ENCODE measurements at regions of chr12 and their contacts with region 1.

Region 1: DNA sequence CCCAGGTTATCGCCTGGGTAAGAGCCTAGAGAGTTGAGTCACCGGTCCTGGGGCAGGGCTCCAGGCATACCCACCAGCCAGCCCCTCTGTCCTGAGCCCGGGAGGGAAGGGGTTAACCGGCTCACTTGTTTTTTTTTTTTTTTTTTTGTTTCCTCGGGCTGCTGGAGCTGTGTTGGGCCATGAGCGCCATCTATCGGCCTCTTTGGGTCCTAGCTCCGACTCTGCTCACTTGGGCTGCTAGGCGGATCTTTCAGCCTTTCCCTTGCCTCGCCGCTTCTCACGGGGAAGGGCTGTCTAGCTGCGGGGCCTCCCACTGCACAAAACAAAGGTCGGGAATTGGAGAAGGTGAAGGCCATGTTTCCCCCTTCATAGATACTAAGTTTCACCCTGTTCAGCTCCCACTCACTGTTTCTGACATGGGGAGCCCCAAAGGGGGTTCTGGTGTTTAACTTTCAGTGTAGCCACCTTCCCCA is 2.8 kb upstream of the SMUG1 start:
- DNase-seq: peak; percentile 82
- ATAC-seq: peak; percentile 54
- H3K4me3 Mint-ChIP-seq: no peak overlapping the region
- H3K27ac Mint-ChIP-seq: no peak overlapping the region
- H3K4me1 Mint-ChIP-seq: peaks cover 21% of the 10 kb centered on the region
- H3K27me3 Mint-ChIP-seq: peaks cover 53% of the 10 kb centered on the region

Region 2: DNA sequence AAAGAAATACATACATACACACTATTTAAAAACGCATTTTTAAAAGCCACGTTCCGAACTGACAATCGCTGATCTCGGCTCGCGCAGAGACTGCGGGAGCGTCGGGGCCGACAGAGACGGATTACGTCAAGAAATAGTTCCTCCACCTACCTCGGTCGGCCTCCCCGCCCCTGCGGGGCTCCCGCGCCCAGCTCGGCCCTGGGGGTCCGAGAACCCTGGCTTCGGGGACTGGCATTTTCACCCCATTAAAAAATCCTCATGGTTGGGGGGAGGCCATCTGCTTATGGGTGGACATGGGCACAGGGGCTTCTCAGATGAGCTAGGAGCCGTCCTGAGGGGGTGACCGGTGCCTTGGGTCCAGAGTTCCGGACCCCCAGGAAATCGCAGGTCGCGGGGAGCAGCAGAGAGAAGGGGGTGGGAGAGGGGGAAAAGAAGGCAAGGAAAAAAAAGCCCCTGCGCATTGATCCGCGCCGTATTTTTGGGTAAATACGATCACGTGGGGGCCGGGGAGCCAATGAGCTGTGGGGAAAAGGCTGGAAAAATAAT is 192.0 kb before region 1 on chr12:
- CTCF ChIA-PET with region 1: interaction called, 136 read pairs
- DNase-seq: no peak
- ATAC-seq: no peak
- H3K4me3 Mint-ChIP-seq: peak overlapping the region; percentile 42
- H3K27ac Mint-ChIP-seq: no peak overlapping the region
- H3K4me1 Mint-ChIP-seq: peaks cover 14% of the 10 kb centered on the region
- H3K27me3 Mint-ChIP-seq: peaks cover 97% of the 10 kb centered on the region

Region 3: GRCh38 chr12:54017878-54018467 is 173.6 kb before region 1 on chr12:
- CTCF ChIA-PET with region 1: interaction called, 18 read pairs
- DNase-seq: peak; percentile 87
- ATAC-seq: peak; percentile 96
- H3K4me3 Mint-ChIP-seq: peak overlapping the region; percentile 74
- H3K27ac Mint-ChIP-seq: peak overlapping the region; percentile 58
- H3K4me1 Mint-ChIP-seq: peaks cover 15% of the 10 kb centered on the region
- H3K27me3 Mint-ChIP-seq: peaks cover 81% of the 10 kb centered on the region

Region 4: GRCh38 chr12:54134850-54135249 is 56.7 kb before region 1 on chr12:
- CTCF ChIA-PET with region 1: no interaction called
- DNase-seq: no peak
- ATAC-seq: no peak
- H3K4me3 Mint-ChIP-seq: no peak overlapping the region
- H3K27ac Mint-ChIP-seq: no peak overlapping the region
- H3K4me1 Mint-ChIP-seq: no peaks in the 10 kb centered on the region
- H3K27me3 Mint-ChIP-seq: peaks cover 86% of the 10 kb centered on the region

Region 5: DNA sequence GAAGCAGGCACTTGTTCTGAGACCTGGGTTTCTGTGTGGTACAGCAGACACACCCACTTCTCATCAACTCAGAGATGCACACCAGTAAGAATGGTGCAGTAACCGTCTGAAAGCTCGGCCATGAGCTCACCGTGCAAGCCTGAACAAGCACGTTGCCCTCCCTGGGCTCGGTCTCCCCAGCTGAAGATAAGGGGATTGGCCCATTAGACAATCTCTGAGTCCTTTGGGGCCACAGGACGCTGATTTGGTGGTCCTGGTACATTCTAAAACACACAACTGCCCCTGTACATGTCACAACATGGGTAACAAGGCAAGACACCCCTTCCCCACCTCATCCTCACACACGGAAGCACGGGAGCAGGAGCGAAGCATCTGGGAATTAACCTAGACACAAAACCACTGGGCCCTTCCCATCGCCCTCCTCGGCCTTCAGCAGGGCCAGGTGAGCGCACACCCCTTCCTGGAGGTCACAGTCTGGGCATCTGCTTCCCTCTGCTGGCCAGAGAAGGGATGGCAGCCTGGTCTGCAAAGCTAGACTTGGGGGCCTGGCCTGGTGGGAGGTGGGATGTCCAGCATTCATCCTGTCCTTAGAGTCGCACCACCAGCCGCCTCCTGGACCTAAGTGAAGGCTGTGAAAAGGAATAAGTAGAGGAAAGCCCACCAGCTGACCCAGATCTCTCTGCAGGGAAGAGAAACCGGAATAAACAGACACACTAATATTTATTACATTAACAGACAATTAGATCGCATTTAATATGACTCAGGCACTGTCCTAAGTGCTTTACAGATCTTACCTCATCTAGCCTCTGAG is 16.1 kb after region 1 on chr12:
- CTCF ChIA-PET with region 1: interaction called, 87 read pairs
- DNase-seq: peak; percentile 87
- ATAC-seq: peak; percentile 92
- H3K4me3 Mint-ChIP-seq: no peak overlapping the region
- H3K27ac Mint-ChIP-seq: no peak overlapping the region
- H3K4me1 Mint-ChIP-seq: peaks cover 2% of the 10 kb centered on the region
- H3K27me3 Mint-ChIP-seq: peaks cover 34% of the 10 kb centered on the region

Region 6: DNA sequence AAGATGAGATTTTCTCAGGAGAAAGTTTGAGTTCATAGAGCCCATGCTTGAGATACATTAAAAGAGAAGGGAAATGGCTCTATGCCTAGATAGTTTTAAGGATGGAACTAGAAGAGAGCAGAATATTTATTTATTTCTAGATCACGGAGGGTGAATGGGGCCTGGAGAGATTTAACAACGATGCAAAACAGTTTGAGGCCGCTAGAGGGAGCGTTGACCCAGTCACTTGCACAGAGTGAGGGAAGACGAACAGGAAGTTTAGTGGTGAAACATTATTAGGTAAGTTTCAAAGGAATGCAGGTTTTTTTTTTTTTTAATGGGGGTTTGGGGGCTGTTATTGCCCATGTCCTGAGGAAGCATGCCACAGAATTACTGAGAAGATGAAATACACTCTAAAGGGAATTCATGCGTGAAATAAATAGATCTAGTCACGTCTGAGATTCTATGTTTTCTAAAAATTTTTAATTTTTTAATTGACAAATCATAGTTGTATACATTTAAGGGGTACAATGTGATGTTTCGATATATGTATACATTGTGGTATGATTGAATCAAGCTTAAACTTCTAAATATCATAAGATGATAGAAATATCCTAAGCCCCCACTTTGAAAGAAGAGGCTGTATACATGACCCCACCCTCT is 411.7 kb after region 1 on chr12:
- CTCF ChIA-PET with region 1: no interaction called
- DNase-seq: peak; percentile 81
- ATAC-seq: peak; percentile 90
- H3K4me3 Mint-ChIP-seq: no peak overlapping the region
- H3K27ac Mint-ChIP-seq: no peak overlapping the region
- H3K4me1 Mint-ChIP-seq: peaks cover 4% of the 10 kb centered on the region
- H3K27me3 Mint-ChIP-seq: peaks cover 20% of the 10 kb centered on the region

Measured in activated CD8-positive, alpha-beta memory T cell treated with anti-CD3 and anti-CD28 coated beads, Interleukin-2, amount 10 ng/mL, durations not matched to agents 7 days and 5 days (primary cell).